Natural killer cell (primary cell): ENCODE measurements at regions of chr19 and their contacts with region 1.

Region 1: GRCh38 chr19:6674868-6675305 is 4.9 kb upstream of the TNFSF14 start:
- DNase-seq: peak; percentile 80 to 90
- ATAC-seq: peak; percentile 54 to 68 (median 59)
- H3K4me3 ChIP-seq: no peak overlapping the region
- H3K4me3 Mint-ChIP-seq: peak overlapping the region; percentile 74
- H3K27ac ChIP-seq: peak overlapping the region; percentile 3
- H3K27ac Mint-ChIP-seq: peak overlapping the region; percentile 39 to 82
- H3K4me1 ChIP-seq: peaks cover 59% of the 10 kb centered on the region
- H3K4me1 Mint-ChIP-seq: peaks cover 51 to 64% of the 10 kb centered on the region in 2 donors
- H3K27me3 ChIP-seq: no peaks in the 10 kb centered on the region
- H3K27me3 Mint-ChIP-seq: no peaks in the 10 kb centered on the region
- CTCF ChIP-seq: no peak

Region 2: GRCh38 chr19:6402837-6403608 is 271.9 kb before region 1 on chr19:
- intact Hi-C with region 1: no loop called
- DNase-seq: no peak
- ATAC-seq: no peak
- H3K4me3 ChIP-seq: no peak overlapping the region
- H3K4me3 Mint-ChIP-seq: no peak overlapping the region
- H3K27ac ChIP-seq: no peak overlapping the region
- H3K27ac Mint-ChIP-seq: no peak overlapping the region
- H3K4me1 ChIP-seq: no peaks in the 10 kb centered on the region
- H3K4me1 Mint-ChIP-seq: no peaks in the 10 kb centered on the region
- H3K27me3 ChIP-seq: no peaks in the 10 kb centered on the region
- H3K27me3 Mint-ChIP-seq: no peaks in the 10 kb centered on the region
- CTCF ChIP-seq: no peak

Region 3: GRCh38 chr19:6632002-6632621 is 42.8 kb before region 1 on chr19:
- intact Hi-C with region 1: loop called (anchors 2 kb)
- DNase-seq: peak; percentile 65 to 93
- ATAC-seq: peak; percentile 92 to 98 (median 95)
- H3K4me3 ChIP-seq: no peak overlapping the region
- H3K4me3 Mint-ChIP-seq: peak overlapping the region; percentile 4
- H3K27ac ChIP-seq: no peak overlapping the region
- H3K27ac Mint-ChIP-seq: peak overlapping the region in 1 of 2 donors; percentile 66
- H3K4me1 ChIP-seq: peaks cover 16% of the 10 kb centered on the region
- H3K4me1 Mint-ChIP-seq: peaks cover 11 to 20% of the 10 kb centered on the region in 2 donors
- H3K27me3 ChIP-seq: no peaks in the 10 kb centered on the region
- H3K27me3 Mint-ChIP-seq: peaks cover 0 to 7% of the 10 kb centered on the region in 2 donors
- CTCF ChIP-seq: peak; percentile 81

Region 4: DNA sequence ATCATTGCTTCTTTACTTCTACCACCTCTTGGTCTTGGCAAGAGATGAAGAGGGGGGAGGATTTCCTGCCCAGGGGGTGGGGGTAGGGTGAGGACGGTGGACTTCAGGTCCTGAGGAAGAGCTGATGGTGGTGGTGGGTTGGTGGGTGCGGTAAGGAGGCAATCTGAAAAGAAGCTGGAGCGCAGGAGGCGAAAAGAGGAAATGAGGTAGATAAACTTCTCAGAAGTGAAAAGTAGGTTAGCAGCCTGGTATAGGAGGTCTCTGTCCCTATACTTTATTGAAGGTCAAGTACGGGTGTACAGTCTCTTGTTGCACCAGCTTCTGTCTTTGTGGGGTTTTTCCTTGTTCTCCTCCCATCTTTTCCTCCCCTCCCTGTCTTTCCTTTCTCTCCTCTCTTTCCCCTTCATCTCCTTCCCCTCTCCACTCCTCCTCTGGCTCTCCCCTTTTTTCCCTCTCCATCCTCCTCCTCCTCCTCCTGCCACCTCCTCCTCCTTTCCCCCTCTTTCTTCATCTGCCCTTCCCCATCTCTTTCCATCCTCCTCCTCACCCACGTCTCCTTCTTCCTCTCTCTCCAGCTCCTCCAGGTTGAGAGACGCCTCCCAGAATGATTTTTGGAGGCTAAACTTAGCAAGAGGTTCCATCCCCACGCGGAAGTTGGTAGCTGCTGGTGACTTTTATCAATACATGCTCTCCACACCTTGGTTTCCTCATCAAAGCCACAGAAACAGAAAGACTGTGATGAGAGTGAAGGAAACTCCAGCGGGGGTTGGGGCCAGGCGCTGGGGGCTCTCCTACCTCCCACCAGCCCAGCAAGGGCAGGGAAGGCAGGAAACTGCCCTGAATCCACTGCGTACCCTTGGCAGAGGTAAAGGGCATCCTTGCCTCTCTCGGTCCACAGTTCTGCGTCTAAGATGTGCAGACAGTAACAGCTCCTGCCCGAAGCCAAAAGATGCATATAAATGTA is 20.3 kb before region 1 on chr19:
- intact Hi-C with region 1: loop called (anchors 2 kb)
- DNase-seq: peak; percentile 53 to 73
- ATAC-seq: peak; percentile 75 to 84 (median 79)
- H3K4me3 ChIP-seq: peak overlapping the region; percentile 29
- H3K4me3 Mint-ChIP-seq: peak overlapping the region; percentile 95
- H3K27ac ChIP-seq: peak overlapping the region; percentile 84
- H3K27ac Mint-ChIP-seq: peak overlapping the region; percentile 97 to 100
- H3K4me1 ChIP-seq: peaks cover 64% of the 10 kb centered on the region
- H3K4me1 Mint-ChIP-seq: peaks cover 47% of the 10 kb centered on the region in 2 donors
- H3K27me3 ChIP-seq: no peaks in the 10 kb centered on the region
- H3K27me3 Mint-ChIP-seq: no peaks in the 10 kb centered on the region
- CTCF ChIP-seq: no peak

Region 5: DNA sequence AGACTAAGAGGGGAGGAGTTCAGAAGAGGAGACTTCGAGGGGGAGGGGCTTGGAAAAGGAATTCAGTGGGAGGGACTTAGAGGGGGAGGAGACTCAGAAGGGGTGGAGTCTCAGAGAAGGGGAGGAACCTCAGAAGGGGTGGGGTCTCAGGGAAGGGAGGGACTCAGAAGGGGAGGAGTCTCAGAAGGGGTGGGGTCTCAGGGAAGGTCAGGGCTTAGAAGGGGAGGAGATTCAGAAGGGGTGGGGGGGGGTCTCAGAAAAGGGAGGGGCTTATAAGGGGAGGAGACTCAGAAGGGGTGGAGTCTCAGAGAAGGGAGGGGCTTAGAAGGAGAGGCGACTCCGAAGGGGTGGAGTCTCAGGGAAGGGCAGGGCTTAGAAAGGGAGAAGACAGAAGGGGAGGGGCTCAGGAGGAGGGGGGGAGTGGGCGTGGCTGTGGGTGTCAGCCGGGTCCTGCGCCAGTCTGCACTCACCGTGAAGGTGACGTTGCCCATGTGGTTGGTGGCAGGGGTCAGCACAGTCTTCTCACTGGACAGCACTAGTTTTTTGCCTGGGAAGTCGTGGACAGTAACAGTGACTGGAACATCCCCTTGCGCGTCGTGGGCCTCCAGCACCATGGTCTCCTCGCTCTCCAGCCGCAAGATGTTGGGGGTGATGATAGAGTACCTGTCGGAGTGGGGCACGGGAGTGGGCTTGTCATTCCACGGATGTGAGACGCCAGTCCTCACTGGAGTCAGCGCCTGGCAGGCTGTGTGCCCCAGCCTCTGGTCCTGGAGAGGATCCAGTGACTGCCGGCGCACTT is 44.1 kb after region 1 on chr19:
- intact Hi-C with region 1: loop called (anchors 5 kb)
- DNase-seq: peak in 1 of 2 donors; percentile 62
- ATAC-seq: peak; percentile 80 to 96 (median 83)
- H3K4me3 ChIP-seq: no peak overlapping the region
- H3K4me3 Mint-ChIP-seq: no peak overlapping the region
- H3K27ac ChIP-seq: no peak overlapping the region
- H3K27ac Mint-ChIP-seq: peak overlapping the region in 1 of 2 donors; percentile 9
- H3K4me1 ChIP-seq: peaks cover 14% of the 10 kb centered on the region
- H3K4me1 Mint-ChIP-seq: peaks cover 25 to 31% of the 10 kb centered on the region in 2 donors
- H3K27me3 ChIP-seq: no peaks in the 10 kb centered on the region
- H3K27me3 Mint-ChIP-seq: peaks cover 0 to 9% of the 10 kb centered on the region in 2 donors
- CTCF ChIP-seq: no peak